Adrenal gland (tissue), 19 donors: ENCODE measurements at regions of chr18 and their contacts with region 1.

Region 1: DNA sequence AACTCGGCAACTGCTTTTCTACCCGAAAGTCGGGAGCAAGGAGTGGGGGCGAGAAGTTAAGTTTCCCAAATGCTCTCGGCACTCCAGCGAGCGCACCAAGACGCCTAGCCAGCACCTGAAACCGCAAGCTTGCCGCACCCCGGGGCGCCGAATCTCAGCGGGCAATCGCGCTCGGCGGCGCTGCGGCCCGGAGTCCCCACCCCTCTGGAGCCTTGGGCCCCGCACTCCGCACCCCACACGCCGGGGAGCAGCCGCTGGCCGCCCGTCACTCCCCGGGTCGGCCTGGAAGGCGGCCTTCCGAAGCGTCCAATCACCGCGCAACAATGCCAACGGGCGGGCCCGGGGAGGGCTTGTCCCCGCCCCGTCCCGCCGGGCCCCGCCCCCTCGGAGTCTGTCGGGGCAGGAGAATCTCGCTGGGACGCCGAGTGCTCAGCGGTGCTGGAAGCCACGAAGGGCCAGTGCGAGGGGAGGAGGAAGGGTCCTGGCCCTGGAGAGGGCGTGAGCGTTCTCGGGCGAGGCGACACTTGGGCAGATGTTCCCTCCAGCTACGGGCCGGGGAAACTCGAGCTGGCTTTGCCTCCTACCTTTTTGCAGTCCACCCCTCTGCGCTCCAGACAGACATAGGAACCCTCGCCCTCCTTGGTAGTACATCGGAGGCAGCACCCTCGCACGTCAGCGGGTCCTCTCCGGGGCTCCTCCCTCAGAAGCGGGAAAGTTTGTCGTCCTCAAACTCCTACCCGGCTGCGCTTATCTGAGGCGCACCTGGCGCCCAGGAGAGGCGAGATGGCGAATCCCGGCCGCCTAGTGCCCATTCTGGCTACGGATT is 1.1 kb upstream of the ZBTB7C start:
- DNase-seq: peak; percentile 93 to 96 (median 95)
- H3K4me3 ChIP-seq: peak overlapping the region; percentile 37 to 91 (median 73)
- H3K27ac ChIP-seq: peak overlapping the region; percentile 56 to 94 (median 90)
- H3K4me1 ChIP-seq: peaks cover 14 to 34% of the 10 kb centered on the region in 2 donors
- H3K27me3 ChIP-seq: no peaks in the 10 kb centered on the region
- CTCF ChIP-seq: peak in 1 of 6 experiments; percentile 8
- POLR2A ChIP-seq: peak; percentile 51 to 92

Region 2: DNA sequence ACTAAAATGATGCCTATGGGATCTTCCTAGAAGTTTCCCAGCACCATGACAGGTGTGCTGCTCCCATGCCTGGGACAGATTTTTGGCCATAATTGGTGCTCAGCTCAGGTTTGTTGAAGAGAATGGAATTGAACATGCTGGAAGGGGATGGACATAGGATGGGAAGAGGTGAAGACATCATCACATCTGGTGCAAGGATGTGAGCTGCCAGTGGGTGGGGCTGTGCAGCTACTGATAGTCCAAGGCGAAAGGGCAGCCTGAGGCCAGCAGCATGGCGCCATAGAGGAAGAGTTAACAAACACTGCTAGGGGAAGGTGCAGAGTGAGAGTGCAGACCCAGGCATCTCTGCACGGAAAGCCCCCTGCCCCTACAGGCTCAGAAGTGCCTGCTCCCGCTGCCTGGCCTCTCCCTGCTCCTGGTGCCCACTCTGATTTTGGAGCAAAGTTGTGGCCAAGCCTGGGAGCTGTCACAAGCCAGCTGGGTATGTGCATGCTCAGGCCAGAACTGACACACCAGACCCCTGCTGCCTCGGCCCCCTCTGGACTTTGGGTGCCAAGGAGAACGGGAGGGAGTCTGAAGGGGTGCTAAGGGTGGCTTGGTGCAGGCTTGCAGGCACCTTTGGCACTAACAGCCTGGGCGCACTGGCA is 179.7 kb before region 1 on chr18:
- intact Hi-C with region 1: loop called in 1 of 2 experiments (anchors 10 kb)
- DNase-seq: peak; percentile 72 to 91 (median 85)
- H3K4me3 ChIP-seq: no peak overlapping the region
- H3K27ac ChIP-seq: peak overlapping the region in 2 of 5 donors; percentile 61 to 65
- H3K4me1 ChIP-seq: peaks cover 25 to 38% of the 10 kb centered on the region in 2 donors
- H3K27me3 ChIP-seq: no peaks in the 10 kb centered on the region
- CTCF ChIP-seq: peak; percentile 40 to 86 (median 69)
- POLR2A ChIP-seq: no peak

Region 3: DNA sequence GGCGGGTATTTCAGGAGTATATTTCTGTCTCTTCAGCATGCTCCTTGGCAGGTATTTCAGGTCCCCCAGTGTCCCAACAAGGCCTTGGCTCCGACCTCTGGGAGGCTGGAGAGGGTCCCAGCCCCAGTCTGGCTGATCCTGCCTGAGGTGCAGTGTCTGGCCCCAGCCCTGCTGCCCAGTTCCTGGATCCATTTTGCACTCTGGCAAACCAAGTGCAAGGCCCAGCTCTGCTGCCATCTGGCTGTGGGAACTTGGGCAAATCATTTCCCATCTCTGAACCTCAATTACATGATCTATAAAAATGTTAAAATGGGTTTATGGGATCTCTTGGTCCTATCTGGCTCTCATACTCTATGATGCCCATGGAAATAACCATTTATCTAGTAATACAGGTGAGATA is 64.7 kb before region 1 on chr18:
- intact Hi-C with region 1: loop called in 1 of 2 experiments (anchors 10 kb)
- DNase-seq: peak in 2 of 7 donors; percentile 18 to 52
- H3K4me3 ChIP-seq: no peak overlapping the region
- H3K27ac ChIP-seq: no peak overlapping the region
- H3K4me1 ChIP-seq: peaks cover 21 to 49% of the 10 kb centered on the region in 2 donors
- H3K27me3 ChIP-seq: no peaks in the 10 kb centered on the region
- CTCF ChIP-seq: peak in 4 of 6 experiments; percentile 22 to 33 (median 26)
- POLR2A ChIP-seq: no peak